Breast epithelium (tissue), 4 donors: ENCODE measurements at regions of chr7 and their contacts with region 1.

Region 1: DNA sequence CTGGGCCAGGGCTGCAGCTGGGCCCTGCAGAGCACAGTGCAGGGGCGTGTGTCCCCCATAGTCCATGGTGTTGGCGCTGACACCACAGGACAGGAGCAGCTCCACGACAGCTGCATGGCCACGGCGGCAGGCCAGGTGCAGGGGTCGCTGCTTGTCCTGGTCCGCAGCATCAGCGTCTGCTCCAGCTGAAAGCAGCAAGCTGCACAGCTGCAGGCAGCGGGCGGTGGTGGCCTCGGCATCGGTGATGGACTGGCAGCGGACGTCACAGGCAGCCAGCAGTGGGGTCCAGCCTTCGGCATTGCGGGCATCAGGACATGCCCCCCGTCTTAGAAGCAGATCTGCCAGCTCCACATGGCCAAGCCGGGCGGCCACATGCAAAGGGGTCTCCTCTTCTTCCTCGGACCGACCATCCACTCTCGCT is 6.0 kb downstream of the ASB10 start:
- DNase-seq: no peak
- H3K4me3 ChIP-seq: no peak overlapping the region
- H3K27ac ChIP-seq: no peak overlapping the region
- H3K4me1 ChIP-seq: no peaks in the 10 kb centered on the region
- H3K27me3 ChIP-seq: peaks cover 0 to 10% of the 10 kb centered on the region in 2 donors
- CTCF ChIP-seq: no peak
- POLR2A ChIP-seq: no peak

Region 2: DNA sequence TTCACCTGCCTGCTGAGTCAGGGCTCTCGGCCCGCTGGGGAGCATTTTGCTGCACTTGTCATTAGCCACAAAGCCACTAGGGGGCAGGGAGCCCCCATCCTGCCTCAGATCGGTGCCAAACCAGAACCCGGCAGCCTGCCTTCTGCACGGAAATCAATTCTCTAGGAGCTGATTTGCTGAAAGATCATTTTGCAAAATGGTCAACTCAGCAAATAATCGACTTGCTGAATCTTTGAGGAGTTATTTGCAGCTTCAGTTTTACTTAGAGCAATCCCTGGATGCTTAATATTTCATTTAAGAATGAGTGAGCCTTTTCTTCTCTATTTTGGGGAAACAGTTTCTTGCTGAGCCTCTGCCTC is 732.3 kb before region 1 on chr7:
- intact Hi-C with region 1: no loop called
- DNase-seq: peak; percentile 45 to 63
- H3K4me3 ChIP-seq: no peak overlapping the region
- H3K27ac ChIP-seq: peak overlapping the region in 1 of 2 donors; percentile 78
- H3K4me1 ChIP-seq: no peaks in the 10 kb centered on the region
- H3K27me3 ChIP-seq: no peaks in the 10 kb centered on the region
- CTCF ChIP-seq: peak; percentile 68 to 73 (median 73)
- POLR2A ChIP-seq: no peak

Region 3: GRCh38 chr7:151131592-151132293 is 49.3 kb before region 1 on chr7:
- intact Hi-C with region 1: loop called (anchors 1 kb)
- DNase-seq: no peak
- H3K4me3 ChIP-seq: no peak overlapping the region
- H3K27ac ChIP-seq: no peak overlapping the region
- H3K4me1 ChIP-seq: no peaks in the 10 kb centered on the region
- H3K27me3 ChIP-seq: no peaks in the 10 kb centered on the region
- CTCF ChIP-seq: no peak
- POLR2A ChIP-seq: no peak